Activated T-helper 2 cell treated with anti-CD3 and anti-CD28 coated beads, Interferon-gamma antibody, Interleukin-2, Interleukin-4, amounts not matched to agents 10 μg/mL and 5 μg/mL and 100 μg/mL, durations not matched to agents 14 hours and 24 hours and 36 hours (primary cell): ENCODE measurements at regions of chr11 and their contacts with region 1.

Region 1: GRCh38 chr11:19723572-19724342 is 11.1 kb downstream of the NAV2 start:
- DNase-seq: peak; percentile 22
- H3K4me3 Mint-ChIP-seq: no peak overlapping the region
- H3K27ac Mint-ChIP-seq: peak overlapping the region; percentile 79
- H3K4me1 Mint-ChIP-seq: peaks cover 17% of the 10 kb centered on the region
- H3K27me3 Mint-ChIP-seq: peaks cover 4% of the 10 kb centered on the region

Region 2: GRCh38 chr11:19511413-19512183 is 212.2 kb before region 1 on chr11:
- intact Hi-C with region 1: no loop called
- DNase-seq: no peak
- H3K4me3 Mint-ChIP-seq: no peak overlapping the region
- H3K27ac Mint-ChIP-seq: no peak overlapping the region
- H3K4me1 Mint-ChIP-seq: no peaks in the 10 kb centered on the region
- H3K27me3 Mint-ChIP-seq: peaks cover 8% of the 10 kb centered on the region

Region 3: DNA sequence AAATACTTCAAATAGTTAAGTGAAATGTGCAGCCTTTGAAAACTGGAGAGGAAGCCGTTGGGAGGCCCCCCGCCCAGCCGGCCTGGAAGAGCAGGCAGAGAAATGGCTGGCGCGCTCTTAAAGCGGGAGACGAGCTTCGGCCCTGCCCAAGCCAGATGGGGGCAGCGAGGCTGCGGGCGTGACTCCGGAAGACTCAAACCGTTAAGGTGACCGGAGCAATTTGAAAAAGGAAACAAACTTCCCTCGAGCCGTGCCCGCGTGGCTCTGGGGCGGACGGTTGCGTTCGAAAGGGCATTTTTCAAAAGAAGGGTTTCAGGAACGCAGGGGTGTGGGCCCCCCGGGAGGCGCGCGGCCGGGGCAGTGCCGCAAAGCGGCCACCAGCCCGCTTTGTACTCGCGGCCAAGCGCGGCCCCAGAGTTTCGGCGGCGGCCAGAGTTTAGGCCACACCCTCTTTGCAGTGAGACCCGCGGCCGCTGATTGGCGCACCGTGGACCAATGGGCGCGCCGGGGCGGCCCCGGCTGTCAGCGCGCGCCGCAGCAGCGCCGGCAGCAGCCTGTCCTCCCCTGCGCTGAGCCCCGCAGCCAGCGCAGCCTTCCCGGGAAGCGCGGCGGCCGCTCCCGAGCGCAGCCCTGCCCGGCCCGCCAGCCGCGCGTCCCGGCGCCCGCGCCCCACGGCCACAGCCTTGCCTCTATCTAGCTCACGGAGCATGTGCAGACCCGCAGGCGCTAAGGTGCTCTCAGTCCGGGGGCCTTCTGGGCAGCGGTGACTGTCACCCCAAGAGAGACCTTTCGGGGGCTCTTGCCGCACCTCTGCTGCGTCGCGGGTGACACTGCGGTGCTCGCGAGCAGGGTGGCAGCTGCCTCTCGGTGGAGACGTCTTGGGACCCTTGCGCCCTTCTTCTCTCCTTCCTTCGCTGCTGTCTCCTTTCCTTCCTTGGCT is 11.2 kb before region 1 on chr11 and contains the start of gene NAV2:
- intact Hi-C with region 1: loop called (anchors 1 kb)
- DNase-seq: peak; percentile 76
- H3K4me3 Mint-ChIP-seq: peak within 1 kb of the TSS; percentile 86
- H3K27ac Mint-ChIP-seq: peak within 1 kb of the TSS; percentile 84
- H3K4me1 Mint-ChIP-seq: peaks cover 20% of the 10 kb centered on the region
- H3K27me3 Mint-ChIP-seq: peaks cover 53% of the 10 kb centered on the region
- total RNA-seq, gene NAV2: 0.02 and 0.39 TPM in 2 replicates